CD4-positive, alpha-beta T cell (primary cell): ENCODE measurements at regions of chr10 and their contacts with region 1.

Region 1: GRCh38 chr10:16817125-16818019 is at the start of gene RSU1:
- DNase-seq: peak; percentile 99 to 100 (median 100)
- ATAC-seq: peak; percentile 96
- H3K4me3 ChIP-seq: peak within 1 kb of the TSS; percentile 78
- H3K4me3 Mint-ChIP-seq: peak within 1 kb of the TSS; percentile 97
- H3K27ac ChIP-seq: peak within 1 kb of the TSS; percentile 82 to 87
- H3K27ac Mint-ChIP-seq: peak within 1 kb of the TSS; percentile 92
- H3K4me1 ChIP-seq: peaks cover 32% of the 10 kb centered on the region
- H3K4me1 Mint-ChIP-seq: peaks cover 50% of the 10 kb centered on the region
- H3K27me3 ChIP-seq: no peaks in the 10 kb centered on the region
- H3K27me3 Mint-ChIP-seq: no peaks in the 10 kb centered on the region
- CTCF ChIP-seq: no peak
- total RNA-seq, gene RSU1: 26.2 to 28.8 TPM

Region 2: GRCh38 chr10:16436758-16437539 is 380.4 kb before region 1 on chr10 and contains the start of gene PTER:
- CTCF ChIA-PET with region 1: no interaction called
- POLR2A ChIA-PET with region 1: interaction called, 22 read pairs
- intact Hi-C with region 1: loop called (anchors 1 to 5 kb)
- DNase-seq: peak; percentile 95 to 99 (median 97)
- ATAC-seq: peak; percentile 98
- H3K4me3 ChIP-seq: peak within 1 kb of the TSS; percentile 68
- H3K4me3 Mint-ChIP-seq: peak within 1 kb of the TSS; percentile 91
- H3K27ac ChIP-seq: peak within 1 kb of the TSS; percentile 57 to 81
- H3K27ac Mint-ChIP-seq: peak within 1 kb of the TSS; percentile 80
- H3K4me1 ChIP-seq: peaks cover 47% of the 10 kb centered on the region
- H3K4me1 Mint-ChIP-seq: peaks cover 47% of the 10 kb centered on the region
- H3K27me3 ChIP-seq: no peaks in the 10 kb centered on the region
- H3K27me3 Mint-ChIP-seq: no peaks in the 10 kb centered on the region
- CTCF ChIP-seq: no peak
- total RNA-seq, gene PTER: 8.2 to 9.7 TPM

Region 3: GRCh38 chr10:16689227-16689626 is 128.1 kb before region 1 on chr10:
- CTCF ChIA-PET with region 1: no interaction called
- POLR2A ChIA-PET with region 1: no interaction called
- intact Hi-C with region 1: no loop called
- DNase-seq: no peak
- ATAC-seq: no peak
- H3K4me3 ChIP-seq: no peak overlapping the region
- H3K4me3 Mint-ChIP-seq: no peak overlapping the region
- H3K27ac ChIP-seq: no peak overlapping the region
- H3K27ac Mint-ChIP-seq: no peak overlapping the region
- H3K4me1 ChIP-seq: no peaks in the 10 kb centered on the region
- H3K4me1 Mint-ChIP-seq: no peaks in the 10 kb centered on the region
- H3K27me3 ChIP-seq: no peaks in the 10 kb centered on the region
- H3K27me3 Mint-ChIP-seq: no peaks in the 10 kb centered on the region
- CTCF ChIP-seq: no peak

Region 4: DNA sequence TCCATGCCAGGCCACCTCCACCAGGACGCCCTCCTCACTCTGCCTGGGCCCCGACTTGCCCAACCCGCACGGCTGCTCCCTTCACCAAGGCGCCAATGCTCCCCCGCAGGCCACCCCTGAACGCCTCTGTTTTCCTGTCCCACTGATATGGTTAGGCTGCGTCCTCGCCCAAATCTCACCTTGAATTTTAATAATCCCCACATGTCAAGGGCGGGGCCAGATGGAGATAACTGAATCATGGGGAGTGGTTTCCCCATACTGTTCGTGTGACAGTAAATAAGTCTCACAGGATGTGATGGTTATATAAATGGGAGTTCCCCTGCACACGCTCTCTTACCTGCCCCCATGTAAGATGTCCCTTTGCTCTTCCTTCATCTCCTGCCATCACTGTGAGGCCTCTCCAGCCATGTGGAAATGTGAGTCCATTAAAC is 30.0 kb before region 1 on chr10:
- CTCF ChIA-PET with region 1: no interaction called
- POLR2A ChIA-PET with region 1: interaction called, 17 read pairs
- intact Hi-C with region 1: loop called in 1 of 2 experiments (anchors 2 kb)
- DNase-seq: peak; percentile 25 to 92 (median 53)
- ATAC-seq: peak; percentile 97
- H3K4me3 ChIP-seq: no peak overlapping the region
- H3K4me3 Mint-ChIP-seq: peak overlapping the region; percentile 5
- H3K27ac ChIP-seq: peak overlapping the region; percentile 71 to 97
- H3K27ac Mint-ChIP-seq: peak overlapping the region; percentile 88
- H3K4me1 ChIP-seq: peaks cover 23% of the 10 kb centered on the region
- H3K4me1 Mint-ChIP-seq: peaks cover 21% of the 10 kb centered on the region
- H3K27me3 ChIP-seq: no peaks in the 10 kb centered on the region
- H3K27me3 Mint-ChIP-seq: no peaks in the 10 kb centered on the region
- CTCF ChIP-seq: no peak

Region 5: GRCh38 chr10:17200912-17201793 is 383.8 kb after region 1 on chr10 and contains the start of gene TRDMT1:
- CTCF ChIA-PET with region 1: no interaction called
- POLR2A ChIA-PET with region 1: interaction called, 14 read pairs
- intact Hi-C with region 1: no loop called
- DNase-seq: peak; percentile 62 to 89 (median 72)
- ATAC-seq: peak; percentile 66
- H3K4me3 ChIP-seq: peak within 1 kb of the TSS; percentile 69
- H3K4me3 Mint-ChIP-seq: peak within 1 kb of the TSS; percentile 89
- H3K27ac ChIP-seq: peak within 1 kb of the TSS; percentile 72 to 89
- H3K27ac Mint-ChIP-seq: peak within 1 kb of the TSS; percentile 96
- H3K4me1 ChIP-seq: peaks cover 21% of the 10 kb centered on the region
- H3K4me1 Mint-ChIP-seq: peaks cover 46% of the 10 kb centered on the region
- H3K27me3 ChIP-seq: no peaks in the 10 kb centered on the region
- H3K27me3 Mint-ChIP-seq: no peaks in the 10 kb centered on the region
- CTCF ChIP-seq: peak; percentile 8
- total RNA-seq, gene TRDMT1: 20.3 to 21.3 TPM